CD8-positive, alpha-beta T cell (primary cell): ENCODE measurements at regions of chr9 and their contacts with region 1.

Region 1: DNA sequence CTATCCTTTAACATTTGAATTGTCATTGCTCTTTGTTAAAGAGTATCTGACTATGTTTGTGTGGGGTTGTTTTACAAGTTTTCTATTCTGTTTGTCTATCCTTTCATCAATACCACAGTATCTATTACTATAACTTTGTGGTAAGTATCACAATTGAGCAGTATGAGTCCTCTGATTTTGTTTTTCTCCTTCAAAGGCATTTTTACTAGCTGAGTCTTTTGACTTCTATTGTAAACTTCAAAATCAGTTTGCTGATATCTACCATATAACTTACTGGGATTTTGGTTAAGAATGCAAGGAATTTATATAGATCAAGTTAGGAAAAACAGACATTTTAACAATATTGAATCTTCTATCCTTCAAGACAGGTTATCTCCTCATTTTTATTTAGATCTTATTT is 789.8 kb upstream of the PTPRD start:
- DNase-seq: no peak
- ATAC-seq: no peak
- H3K4me3 ChIP-seq: no peak overlapping the region
- H3K4me3 Mint-ChIP-seq: no peak overlapping the region
- H3K27ac ChIP-seq: no peak overlapping the region
- H3K27ac Mint-ChIP-seq: no peak overlapping the region
- H3K4me1 ChIP-seq: no peaks in the 10 kb centered on the region
- H3K4me1 Mint-ChIP-seq: no peaks in the 10 kb centered on the region
- H3K27me3 ChIP-seq: no peaks in the 10 kb centered on the region
- H3K27me3 Mint-ChIP-seq: no peaks in the 10 kb centered on the region
- CTCF ChIP-seq: no peak

Region 2: GRCh38 chr9:11431490-11431889 is 28.9 kb after region 1 on chr9:
- CTCF ChIA-PET with region 1: no interaction called
- POLR2A ChIA-PET with region 1: no interaction called
- intact Hi-C with region 1: loop called in 1 of 2 experiments (anchors 1 kb)
- DNase-seq: no peak
- ATAC-seq: no peak
- H3K4me3 ChIP-seq: no peak overlapping the region
- H3K4me3 Mint-ChIP-seq: no peak overlapping the region
- H3K27ac ChIP-seq: no peak overlapping the region
- H3K27ac Mint-ChIP-seq: no peak overlapping the region
- H3K4me1 ChIP-seq: no peaks in the 10 kb centered on the region
- H3K4me1 Mint-ChIP-seq: no peaks in the 10 kb centered on the region
- H3K27me3 ChIP-seq: no peaks in the 10 kb centered on the region
- H3K27me3 Mint-ChIP-seq: no peaks in the 10 kb centered on the region
- CTCF ChIP-seq: no peak

Region 3: GRCh38 chr9:12448246-12448645 is 1045.6 kb after region 1 on chr9:
- CTCF ChIA-PET with region 1: no interaction called
- POLR2A ChIA-PET with region 1: no interaction called
- intact Hi-C with region 1: no loop called
- DNase-seq: no peak
- ATAC-seq: no peak
- H3K4me3 ChIP-seq: no peak overlapping the region
- H3K4me3 Mint-ChIP-seq: no peak overlapping the region
- H3K27ac ChIP-seq: no peak overlapping the region
- H3K27ac Mint-ChIP-seq: no peak overlapping the region
- H3K4me1 ChIP-seq: no peaks in the 10 kb centered on the region
- H3K4me1 Mint-ChIP-seq: no peaks in the 10 kb centered on the region
- H3K27me3 ChIP-seq: no peaks in the 10 kb centered on the region
- H3K27me3 Mint-ChIP-seq: no peaks in the 10 kb centered on the region
- CTCF ChIP-seq: no peak